ENCODE measurements at regions of chr3 and their contacts with region 1.

Region 1: GRCh38 chr3:142586803-142587406 is 8.4 kb upstream of the ATR start:
- DNase-seq: peak; percentile 21
- ATAC-seq: peak; percentile 69
- H3K4me3 Mint-ChIP-seq: no peak overlapping the region
- H3K27ac Mint-ChIP-seq: no peak overlapping the region
- H3K4me1 Mint-ChIP-seq: no peaks in the 10 kb centered on the region
- H3K27me3 Mint-ChIP-seq: peaks cover 2% of the 10 kb centered on the region

Region 2: DNA sequence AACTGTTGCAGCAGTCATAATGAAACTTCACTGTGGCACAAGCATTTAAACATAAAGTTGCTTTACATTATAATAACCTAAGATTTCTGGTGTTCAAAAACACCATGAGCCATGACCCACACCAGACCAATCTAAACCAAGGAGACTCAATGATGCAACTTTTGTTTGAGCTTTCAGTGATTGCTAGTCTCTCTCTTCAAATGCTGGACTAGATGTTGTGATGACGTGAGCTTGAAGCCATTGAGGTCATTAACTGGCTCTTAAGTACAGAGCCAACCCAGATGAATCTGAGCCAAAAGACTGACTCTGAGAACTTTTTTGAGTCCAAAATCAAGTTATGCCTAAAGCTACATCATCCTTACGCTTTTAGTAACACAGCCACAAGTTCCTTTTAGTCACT is 44.9 kb before region 1 on chr3:
- CTCF ChIA-PET with region 1: no interaction called
- POLR2A ChIA-PET with region 1: no interaction called
- intact Hi-C with region 1: no loop called
- DNase-seq: no peak
- ATAC-seq: no peak
- H3K4me3 Mint-ChIP-seq: no peak overlapping the region
- H3K27ac Mint-ChIP-seq: no peak overlapping the region
- H3K4me1 Mint-ChIP-seq: no peaks in the 10 kb centered on the region
- H3K27me3 Mint-ChIP-seq: no peaks in the 10 kb centered on the region

Region 3: DNA sequence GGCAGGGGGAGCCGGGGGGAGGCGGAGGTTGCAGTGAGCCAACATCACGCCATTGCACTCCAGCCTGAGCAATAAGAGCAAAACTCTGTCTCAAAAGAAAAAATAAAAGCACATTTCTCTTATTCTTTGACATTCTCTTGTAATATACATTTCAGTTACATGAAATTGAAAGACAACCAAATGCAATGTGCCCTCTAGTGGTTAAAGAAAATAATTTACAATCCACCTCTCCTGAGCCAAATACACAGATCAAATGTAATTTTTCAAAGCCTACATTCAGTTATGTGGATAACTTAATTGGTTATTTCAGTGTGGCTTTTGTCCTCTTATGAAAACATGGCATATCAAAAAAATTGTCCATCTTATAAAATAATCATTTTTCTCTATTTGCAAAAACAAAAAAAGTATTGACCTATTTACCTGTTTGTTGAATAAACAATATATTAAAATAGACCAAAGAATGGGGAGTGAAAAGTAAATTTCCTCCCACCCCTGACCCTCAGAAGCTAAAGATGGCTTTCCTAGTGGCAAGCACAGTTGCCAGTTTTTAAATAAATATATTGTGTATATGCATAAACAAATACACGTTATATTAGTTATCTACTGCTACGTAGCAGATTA is 400.3 kb after region 1 on chr3:
- CTCF ChIA-PET with region 1: no interaction called
- POLR2A ChIA-PET with region 1: no interaction called
- intact Hi-C with region 1: loop called (anchors 1 to 2 kb)
- DNase-seq: no peak
- ATAC-seq: peak; percentile 51
- H3K4me3 Mint-ChIP-seq: no peak overlapping the region
- H3K27ac Mint-ChIP-seq: no peak overlapping the region
- H3K4me1 Mint-ChIP-seq: no peaks in the 10 kb centered on the region
- H3K27me3 Mint-ChIP-seq: peaks cover 14% of the 10 kb centered on the region

Region 4: DNA sequence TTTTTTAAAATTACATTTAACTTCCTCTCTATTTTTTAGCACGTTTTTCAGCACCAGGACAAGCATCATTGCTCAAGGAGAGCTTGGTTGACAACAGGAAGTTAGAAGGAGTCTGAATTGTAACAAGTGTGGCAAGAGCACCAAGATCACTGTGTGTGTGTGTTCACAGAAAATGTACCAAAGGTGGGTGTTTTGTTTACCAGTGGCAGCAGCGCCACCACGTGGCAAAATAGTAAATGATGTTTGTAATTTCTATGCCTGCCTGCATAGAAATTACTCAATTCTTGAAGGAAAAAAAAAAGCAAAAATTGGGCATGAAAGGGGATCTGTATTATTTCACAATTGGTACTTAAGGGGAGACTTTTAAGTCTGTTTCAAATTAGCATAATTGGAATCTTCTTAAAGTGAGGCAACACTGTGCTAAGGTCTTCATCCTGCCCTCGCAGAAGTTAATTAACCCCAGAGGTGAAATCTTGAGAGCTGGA is 407.1 kb after region 1 on chr3:
- CTCF ChIA-PET with region 1: no interaction called
- POLR2A ChIA-PET with region 1: no interaction called
- intact Hi-C with region 1: loop called in 1 of 2 experiments (anchors 2 kb)
- DNase-seq: peak; percentile 76
- ATAC-seq: peak; percentile 74
- H3K4me3 Mint-ChIP-seq: no peak overlapping the region
- H3K27ac Mint-ChIP-seq: no peak overlapping the region
- H3K4me1 Mint-ChIP-seq: peaks cover 4% of the 10 kb centered on the region
- H3K27me3 Mint-ChIP-seq: peaks cover 5% of the 10 kb centered on the region

Region 5: GRCh38 chr3:143302638-143303171 is 715.8 kb after region 1 on chr3:
- CTCF ChIA-PET with region 1: no interaction called
- POLR2A ChIA-PET with region 1: no interaction called
- intact Hi-C with region 1: no loop called
- DNase-seq: no peak
- ATAC-seq: no peak
- H3K4me3 Mint-ChIP-seq: no peak overlapping the region
- H3K27ac Mint-ChIP-seq: no peak overlapping the region
- H3K4me1 Mint-ChIP-seq: peaks cover 14% of the 10 kb centered on the region
- H3K27me3 Mint-ChIP-seq: no peaks in the 10 kb centered on the region

Measured in activated CD4-positive, alpha-beta T cell treated with anti-CD3 and anti-CD28 coated beads for 36 hours (primary cell).